ENCODE measurements at regions of chr15 and their contacts with region 1.

Region 1: GRCh38 chr15:68053701-68054627 is at the start of gene PIAS1:
- DNase-seq: peak; percentile 96 to 97
- H3K4me3 ChIP-seq: peak within 1 kb of the TSS; percentile 79 to 99 (median 96)
- H3K27ac ChIP-seq: peak within 1 kb of the TSS; percentile 93 to 97 (median 95)
- H3K4me1 ChIP-seq: peaks cover 25 to 27% of the 10 kb centered on the region in 2 donors
- H3K27me3 ChIP-seq: no peaks in the 10 kb centered on the region
- CTCF ChIP-seq: peak in 1 of 6 experiments; percentile 19
- POLR2A ChIP-seq: peak; percentile 84 to 94
- total RNA-seq, gene PIAS1: 91.6 to 202 (median 111) TPM

Region 2: GRCh38 chr15:67863442-67863987 is 190.4 kb before region 1 on chr15:
- intact Hi-C with region 1: loop called (anchors 10 kb)
- DNase-seq: peak; percentile 84
- H3K4me3 ChIP-seq: peak overlapping the region in 1 of 3 donors; percentile 18
- H3K27ac ChIP-seq: peak overlapping the region; percentile 63 to 71 (median 63)
- H3K4me1 ChIP-seq: peaks cover 11 to 22% of the 10 kb centered on the region in 2 donors
- H3K27me3 ChIP-seq: no peaks in the 10 kb centered on the region
- CTCF ChIP-seq: peak; percentile 79 to 97 (median 87)
- POLR2A ChIP-seq: peak in 1 of 2 donors; percentile 63

Region 3: DNA sequence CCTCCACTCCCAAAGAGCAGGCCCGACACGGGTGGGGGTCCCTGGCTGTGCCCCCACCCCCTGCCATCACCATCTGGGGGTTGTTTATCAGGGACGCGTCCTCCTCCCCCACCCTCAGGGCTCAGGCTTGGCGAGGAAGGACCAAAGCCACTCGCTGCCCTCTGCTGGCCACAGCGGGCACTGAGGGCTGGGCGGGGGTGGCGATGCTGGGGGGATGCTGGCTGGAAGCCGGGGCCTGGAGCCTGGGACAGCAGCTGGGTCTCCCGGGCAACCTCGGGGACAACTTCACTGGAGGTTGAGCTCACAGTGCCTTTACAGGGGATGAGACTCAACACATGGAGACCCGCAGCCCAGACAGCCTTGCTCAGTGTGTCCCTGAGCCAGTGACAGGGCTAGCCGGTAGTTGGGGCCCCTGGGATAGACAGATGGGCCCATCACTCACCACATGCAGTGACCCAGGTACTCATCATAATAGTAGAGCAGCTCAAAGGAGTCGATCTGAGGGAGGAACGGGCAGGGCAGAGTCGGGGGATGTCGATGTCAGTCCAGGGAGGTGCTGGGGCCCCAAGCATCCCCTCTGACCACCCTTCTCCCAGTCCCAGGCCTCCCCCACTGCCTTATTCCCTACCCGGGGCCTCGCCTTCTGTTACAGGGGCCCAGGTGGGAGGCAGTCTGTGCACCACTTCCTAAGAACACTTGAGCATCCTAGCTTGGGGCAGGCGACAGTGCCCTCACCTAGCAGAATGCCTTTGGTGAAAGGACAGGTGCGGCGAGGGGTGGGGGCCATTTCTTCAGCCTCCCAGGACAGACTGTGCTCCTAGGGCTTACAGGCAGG is 157.1 kb after region 1 on chr15:
- intact Hi-C with region 1: loop called (anchors 10 kb)
- DNase-seq: peak; percentile 46 to 54
- H3K4me3 ChIP-seq: no peak overlapping the region
- H3K27ac ChIP-seq: no peak overlapping the region
- H3K4me1 ChIP-seq: peaks cover 0 to 5% of the 10 kb centered on the region in 2 donors
- H3K27me3 ChIP-seq: no peaks in the 10 kb centered on the region
- CTCF ChIP-seq: peak; percentile 42 to 89 (median 68)
- POLR2A ChIP-seq: no peak